Activated T-helper 2 cell treated with anti-CD3 and anti-CD28 coated beads, Interferon-gamma antibody, Interleukin-2, Interleukin-4, amounts not matched to agents 10 μg/mL and 5 μg/mL and 100 μg/mL, durations not matched to agents 14 hours and 24 hours and 36 hours (primary cell): ENCODE measurements at regions of chr9 and their contacts with region 1.

Region 1: GRCh38 chr9:71975833-71976232 is 64.4 kb downstream of the C9orf85 start:
- DNase-seq: no peak
- H3K4me3 Mint-ChIP-seq: no peak overlapping the region
- H3K27ac Mint-ChIP-seq: no peak overlapping the region
- H3K4me1 Mint-ChIP-seq: no peaks in the 10 kb centered on the region
- H3K27me3 Mint-ChIP-seq: no peaks in the 10 kb centered on the region

Region 2: GRCh38 chr9:71806901-71807307 is 168.9 kb before region 1 on chr9:
- intact Hi-C with region 1: loop called (anchors 2 kb)
- DNase-seq: peak; percentile 45
- H3K4me3 Mint-ChIP-seq: no peak overlapping the region
- H3K27ac Mint-ChIP-seq: no peak overlapping the region
- H3K4me1 Mint-ChIP-seq: peaks cover 8% of the 10 kb centered on the region
- H3K27me3 Mint-ChIP-seq: peaks cover 9% of the 10 kb centered on the region